ENCODE measurements at regions of chr17 and their contacts with region 1.

Region 1: GRCh38 chr17:10226930-10227685 is 28.7 kb upstream of the GAS7 start:
- DNase-seq: no peak
- H3K4me3 ChIP-seq: no peak overlapping the region
- H3K27ac ChIP-seq: no peak overlapping the region
- H3K4me1 ChIP-seq: no peaks in the 10 kb centered on the region
- H3K27me3 ChIP-seq: no peaks in the 10 kb centered on the region
- CTCF ChIP-seq: peak; percentile 72 to 87 (median 81)
- EP300 ChIP-seq: no peak
- POLR2A ChIP-seq: no peak

Region 2: DNA sequence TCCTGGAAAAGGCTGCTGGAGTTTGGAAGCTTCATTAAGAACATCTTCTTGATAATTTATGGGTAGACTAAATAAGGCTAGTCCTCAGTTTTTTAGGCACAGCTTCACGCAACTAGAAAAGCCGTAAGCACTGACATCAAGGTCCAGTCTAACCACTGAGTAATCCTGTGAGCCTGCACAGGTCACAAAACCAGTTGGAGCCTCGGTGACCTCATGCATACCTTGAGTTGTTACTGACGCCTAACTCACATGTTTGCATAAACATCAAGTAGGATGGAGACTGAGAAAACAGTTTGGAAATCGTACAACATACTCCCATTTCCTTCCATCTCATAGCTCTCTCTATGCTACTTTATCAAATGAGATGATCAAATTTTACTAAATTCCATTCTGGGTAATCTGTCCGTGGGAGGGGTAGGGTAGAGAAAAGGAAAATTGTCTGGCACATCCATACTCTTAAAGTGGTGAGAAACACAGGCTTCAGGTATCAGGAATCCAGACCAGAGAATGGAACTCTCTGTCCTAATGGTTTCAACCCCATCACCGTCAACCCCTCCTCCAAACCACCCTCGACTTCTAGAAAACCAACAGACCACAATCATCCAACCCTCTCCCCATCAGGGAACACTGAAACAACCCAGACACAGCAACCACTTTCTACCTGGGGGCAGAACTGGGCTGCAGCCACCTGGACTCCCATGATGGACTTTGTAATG is 258.0 kb before region 1 on chr17:
- intact Hi-C with region 1: loop called (anchors 1 kb)
- DNase-seq: no peak
- H3K4me3 ChIP-seq: no peak overlapping the region
- H3K27ac ChIP-seq: no peak overlapping the region
- H3K4me1 ChIP-seq: peaks cover 7 to 18% (median 16%) of the 10 kb centered on the region in 4 donors
- H3K27me3 ChIP-seq: no peaks in the 10 kb centered on the region
- CTCF ChIP-seq: no peak
- EP300 ChIP-seq: no peak
- POLR2A ChIP-seq: no peak

Region 3: GRCh38 chr17:10271106-10271562 is 44.0 kb after region 1 on chr17:
- intact Hi-C with region 1: no loop called
- DNase-seq: no peak
- H3K4me3 ChIP-seq: no peak overlapping the region
- H3K27ac ChIP-seq: no peak overlapping the region
- H3K4me1 ChIP-seq: no peaks in the 10 kb centered on the region
- H3K27me3 ChIP-seq: peaks cover 0 to 10% (median 0%) of the 10 kb centered on the region in 4 donors
- CTCF ChIP-seq: no peak
- EP300 ChIP-seq: no peak
- POLR2A ChIP-seq: no peak

Region 4: DNA sequence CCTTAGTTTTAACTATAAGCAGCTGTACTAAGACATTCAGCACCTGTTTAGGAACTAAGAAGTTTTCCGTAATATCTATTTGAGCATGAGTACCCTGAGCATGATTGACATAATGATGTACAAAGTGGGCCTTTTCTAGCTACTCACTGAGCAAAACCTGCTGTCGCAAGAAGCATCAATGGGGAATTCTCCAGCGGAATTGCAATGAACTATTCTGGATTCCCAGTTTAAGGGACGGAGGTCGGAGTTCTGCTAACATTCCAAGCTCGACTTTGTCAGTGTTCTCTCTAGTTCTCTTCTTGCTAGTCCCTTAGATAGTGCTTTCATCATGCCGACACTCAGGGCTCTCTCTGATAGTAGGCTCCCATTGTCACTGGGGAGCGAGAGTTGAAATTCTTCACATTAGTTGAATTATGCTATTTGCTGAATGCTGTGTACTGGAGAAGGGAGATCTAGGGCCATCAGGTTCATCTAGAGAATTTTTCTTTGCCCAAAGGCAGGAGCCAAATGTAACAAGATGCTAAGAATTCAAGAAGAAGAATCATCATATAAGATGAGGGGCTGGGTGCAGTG is 362.5 kb after region 1 on chr17:
- intact Hi-C with region 1: no loop called
- DNase-seq: no peak
- H3K4me3 ChIP-seq: no peak overlapping the region
- H3K27ac ChIP-seq: no peak overlapping the region
- H3K4me1 ChIP-seq: no peaks in the 10 kb centered on the region
- H3K27me3 ChIP-seq: peaks cover 0 to 10% (median 0%) of the 10 kb centered on the region in 4 donors
- CTCF ChIP-seq: no peak
- EP300 ChIP-seq: no peak
- POLR2A ChIP-seq: no peak

Measured in esophagus muscularis mucosa (tissue), 4 donors.